AG04449 (cell line): ENCODE measurements at regions of chr22 and their contacts with region 1.

Region 1: GRCh38 chr22:39123751-39124601 is 26.9 kb downstream of the APOBEC3H start:
- DNase-seq: no peak
- H3K4me3 ChIP-seq: no peak overlapping the region
- CTCF ChIP-seq: no peak

Region 2: DNA sequence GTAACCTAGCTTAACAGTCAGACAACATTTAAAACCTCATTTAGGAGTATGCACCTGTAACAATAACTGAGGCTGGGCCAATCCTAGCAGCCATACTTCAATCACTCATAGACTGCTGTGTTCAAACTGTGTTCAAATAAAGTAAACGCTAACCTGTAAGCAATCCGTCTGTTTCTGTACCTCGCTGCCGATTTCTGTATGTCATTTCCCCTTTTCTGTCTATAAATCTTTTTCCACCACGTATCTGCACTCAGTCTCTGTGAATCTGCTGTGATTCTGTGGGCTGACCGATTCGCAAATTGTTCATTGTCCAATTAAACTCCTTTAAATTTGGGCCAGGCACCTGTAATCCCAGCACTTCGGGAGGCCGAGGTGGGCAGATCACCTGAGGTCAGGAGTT is 14.6 kb before region 1 on chr22:
- CTCF ChIA-PET with region 1: interaction called, 10 read pairs
- POLR2A ChIA-PET with region 1: no interaction called
- DNase-seq: no peak
- H3K4me3 ChIP-seq: no peak overlapping the region
- CTCF ChIP-seq: no peak

Region 3: DNA sequence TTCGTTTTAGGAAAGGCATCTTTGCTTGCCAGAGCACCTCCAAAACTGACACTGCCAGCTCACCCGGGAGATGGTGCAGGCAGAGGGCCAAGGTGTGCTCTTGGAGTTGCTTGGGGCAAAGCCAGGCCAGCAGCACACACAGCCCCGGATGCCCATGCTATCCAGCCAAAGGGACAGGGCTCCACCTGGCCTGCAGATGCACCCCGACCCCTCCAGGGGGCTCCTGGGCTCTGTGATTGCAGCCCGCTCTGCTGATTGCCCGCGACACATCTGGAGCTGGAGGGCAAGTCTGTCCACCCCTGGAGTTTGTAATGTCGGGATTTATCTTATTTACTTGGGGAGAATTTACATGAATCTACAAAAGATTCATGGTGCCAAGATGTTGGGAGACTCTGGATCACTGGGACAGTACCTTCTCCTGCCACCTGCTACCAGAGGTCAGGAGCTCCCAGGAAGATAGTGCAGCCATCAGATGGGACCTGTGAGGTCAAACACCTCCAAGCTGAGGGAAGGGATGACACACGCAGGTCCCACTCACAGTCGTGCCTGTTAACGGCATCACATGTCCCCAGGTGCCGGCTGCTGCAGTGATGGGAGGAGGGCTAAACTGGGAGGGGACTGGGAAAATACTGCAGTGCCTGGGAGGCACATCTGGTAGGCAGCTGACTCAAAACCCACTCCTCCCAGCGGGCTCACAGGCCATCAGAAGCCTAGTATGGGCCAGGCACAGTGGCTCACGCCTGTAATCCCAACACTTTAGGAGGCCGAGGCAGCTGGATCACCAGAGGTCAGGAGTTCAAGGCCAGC is 11.3 kb after region 1 on chr22:
- CTCF ChIA-PET with region 1: interaction called, 23 read pairs
- POLR2A ChIA-PET with region 1: no interaction called
- DNase-seq: no peak
- H3K4me3 ChIP-seq: no peak overlapping the region
- CTCF ChIP-seq: peak; percentile 82

Region 4: GRCh38 chr22:39183991-39184585 is 60.1 kb after region 1 on chr22:
- CTCF ChIA-PET with region 1: no interaction called
- POLR2A ChIA-PET with region 1: no interaction called
- DNase-seq: no peak
- H3K4me3 ChIP-seq: no peak overlapping the region
- CTCF ChIP-seq: no peak

Region 5: GRCh38 chr22:39220897-39221850 is 97.2 kb after region 1 on chr22:
- CTCF ChIA-PET with region 1: no interaction called
- POLR2A ChIA-PET with region 1: no interaction called
- DNase-seq: no peak
- H3K4me3 ChIP-seq: no peak overlapping the region
- CTCF ChIP-seq: no peak